MCF 10A (cell line): ENCODE measurements at regions of chr6 and their contacts with region 1.

Region 1: DNA sequence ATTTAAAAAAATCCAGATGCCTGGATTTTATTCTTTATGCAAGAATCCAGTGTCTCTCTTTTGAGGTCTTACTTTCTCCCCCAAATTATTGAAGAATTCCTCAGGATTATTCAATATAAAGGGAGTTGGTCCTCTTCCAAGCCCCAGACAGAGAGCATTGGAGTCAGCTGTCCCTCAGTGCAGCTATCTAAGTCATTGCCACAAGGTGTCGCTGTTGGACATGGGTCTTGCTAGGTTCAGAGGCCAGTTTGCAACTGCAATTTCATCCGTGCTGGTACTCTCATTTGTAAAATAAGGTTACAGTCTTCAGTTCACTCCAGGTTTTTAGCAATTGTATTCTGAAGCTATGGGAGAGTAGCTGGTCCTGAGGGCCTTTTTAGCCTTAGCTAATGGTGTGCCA is 27.8 kb downstream of the CCN2 start:
- DNase-seq: peak; percentile 83
- H3K4me3 Mint-ChIP-seq: no peak overlapping the region
- H3K27ac Mint-ChIP-seq: no peak overlapping the region
- H3K4me1 Mint-ChIP-seq: peaks cover 6% of the 10 kb centered on the region
- H3K27me3 Mint-ChIP-seq: no peaks in the 10 kb centered on the region
- CTCF ChIP-seq: peak; percentile 54

Region 2: DNA sequence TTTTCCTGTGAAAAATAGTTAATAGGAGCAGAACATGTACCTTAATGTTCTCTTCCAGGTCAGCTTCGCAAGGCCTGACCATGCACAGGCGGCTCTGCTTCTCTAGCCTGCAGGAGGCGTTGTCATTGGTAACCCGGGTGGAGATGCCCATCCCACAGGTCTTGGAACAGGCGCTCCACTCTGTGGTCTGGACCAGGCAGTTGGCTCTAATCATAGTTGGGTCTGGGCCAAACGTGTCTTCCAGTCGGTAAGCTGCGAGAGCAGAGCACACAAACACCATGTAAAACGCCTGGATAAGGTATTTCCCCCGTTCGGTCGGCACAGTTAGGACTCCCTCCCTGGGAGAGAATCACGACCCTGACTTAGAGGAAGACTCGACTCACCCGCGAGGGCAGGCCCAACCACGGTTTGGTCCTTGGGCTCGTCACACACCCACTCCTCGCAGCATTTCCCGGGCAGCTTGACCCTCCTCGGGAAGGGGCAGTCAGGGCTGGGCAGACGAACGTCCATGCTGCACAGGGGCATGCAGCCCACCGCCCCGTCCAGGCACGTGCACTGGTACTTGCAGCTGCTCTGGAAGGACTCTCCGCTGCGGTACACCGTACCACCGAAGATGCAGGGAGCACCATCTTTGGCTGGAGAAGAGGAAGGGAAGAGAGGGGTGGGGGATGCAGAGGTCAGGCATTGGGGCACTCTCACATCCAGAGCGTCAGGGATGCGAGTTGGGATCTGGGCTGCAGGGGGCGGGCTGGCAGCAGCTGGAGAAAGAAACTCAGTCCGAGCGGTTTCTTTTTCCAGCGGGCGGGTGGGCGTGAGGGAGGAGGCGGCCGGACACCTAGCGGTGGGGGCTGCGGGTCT is 26.8 kb after region 1 on chr6:
- CTCF ChIA-PET with region 1: interaction called, 19 read pairs
- POLR2A ChIA-PET with region 1: interaction called, 4 read pairs
- intact Hi-C with region 1: no loop called
- DNase-seq: peak; percentile 90
- H3K4me3 Mint-ChIP-seq: peak overlapping the region; percentile 88
- H3K27ac Mint-ChIP-seq: peak overlapping the region; percentile 76
- H3K4me1 Mint-ChIP-seq: peaks cover 44% of the 10 kb centered on the region
- H3K27me3 Mint-ChIP-seq: no peaks in the 10 kb centered on the region
- CTCF ChIP-seq: peak; percentile 45

Region 3: GRCh38 chr6:132179955-132180354 is 256.6 kb after region 1 on chr6:
- CTCF ChIA-PET with region 1: interaction called, 10 read pairs
- POLR2A ChIA-PET with region 1: no interaction called
- intact Hi-C with region 1: no loop called
- DNase-seq: no peak
- H3K4me3 Mint-ChIP-seq: no peak overlapping the region
- H3K27ac Mint-ChIP-seq: no peak overlapping the region
- H3K4me1 Mint-ChIP-seq: no peaks in the 10 kb centered on the region
- H3K27me3 Mint-ChIP-seq: no peaks in the 10 kb centered on the region
- CTCF ChIP-seq: no peak

Region 4: GRCh38 chr6:132210886-132211563 is 287.7 kb after region 1 on chr6:
- CTCF ChIA-PET with region 1: interaction called, 59 read pairs
- POLR2A ChIA-PET with region 1: no interaction called
- intact Hi-C with region 1: no loop called
- DNase-seq: no peak
- H3K4me3 Mint-ChIP-seq: no peak overlapping the region
- H3K27ac Mint-ChIP-seq: no peak overlapping the region
- H3K4me1 Mint-ChIP-seq: peaks cover 6% of the 10 kb centered on the region
- H3K27me3 Mint-ChIP-seq: no peaks in the 10 kb centered on the region
- CTCF ChIP-seq: no peak

Region 5: GRCh38 chr6:132252113-132252512 is 328.8 kb after region 1 on chr6:
- CTCF ChIA-PET with region 1: interaction called, 76 read pairs
- POLR2A ChIA-PET with region 1: no interaction called
- intact Hi-C with region 1: no loop called
- DNase-seq: peak; percentile 60
- H3K4me3 Mint-ChIP-seq: no peak overlapping the region
- H3K27ac Mint-ChIP-seq: peak overlapping the region; percentile 57
- H3K4me1 Mint-ChIP-seq: peaks cover 11% of the 10 kb centered on the region
- H3K27me3 Mint-ChIP-seq: no peaks in the 10 kb centered on the region
- CTCF ChIP-seq: no peak

Region 6: DNA sequence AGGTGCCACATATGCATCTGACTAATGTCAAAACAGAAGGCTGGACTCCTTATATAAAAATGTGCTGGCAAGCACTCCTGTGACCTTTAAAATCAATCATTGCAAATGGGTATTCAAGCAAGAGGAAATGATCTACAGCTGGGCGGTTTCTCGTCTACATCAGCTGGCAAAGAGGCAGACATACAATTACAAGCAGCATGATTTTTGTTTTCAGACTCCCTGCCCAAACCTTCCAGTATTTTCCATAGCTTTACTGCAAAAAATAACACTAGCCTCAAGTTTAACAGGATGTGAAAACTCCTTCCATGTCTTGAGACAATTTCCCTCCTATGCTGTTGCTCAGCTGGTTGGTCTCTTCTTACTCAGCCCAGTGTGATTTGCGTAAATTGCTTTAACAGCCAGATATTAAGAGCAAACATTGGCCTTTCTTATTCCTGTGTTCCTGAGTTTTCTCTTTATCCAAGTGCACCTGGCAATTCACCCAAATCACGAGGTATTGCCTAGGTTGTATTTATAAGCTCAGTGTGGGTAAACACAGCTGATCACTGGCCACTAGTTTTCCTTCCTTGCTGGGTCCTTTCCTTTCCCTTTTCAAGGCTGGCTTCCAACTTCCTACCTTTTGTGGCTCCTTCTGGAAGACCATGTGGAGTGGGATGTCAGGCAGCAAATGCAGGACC is 347.5 kb after region 1 on chr6:
- CTCF ChIA-PET with region 1: interaction called, 25 read pairs
- POLR2A ChIA-PET with region 1: no interaction called
- intact Hi-C with region 1: no loop called
- DNase-seq: no peak
- H3K4me3 Mint-ChIP-seq: no peak overlapping the region
- H3K27ac Mint-ChIP-seq: no peak overlapping the region
- H3K4me1 Mint-ChIP-seq: no peaks in the 10 kb centered on the region
- H3K27me3 Mint-ChIP-seq: no peaks in the 10 kb centered on the region
- CTCF ChIP-seq: no peak

Region 7: GRCh38 chr6:132344811-132345210 is 421.5 kb after region 1 on chr6:
- CTCF ChIA-PET with region 1: no interaction called
- POLR2A ChIA-PET with region 1: no interaction called
- intact Hi-C with region 1: no loop called
- DNase-seq: no peak
- H3K4me3 Mint-ChIP-seq: no peak overlapping the region
- H3K27ac Mint-ChIP-seq: no peak overlapping the region
- H3K4me1 Mint-ChIP-seq: no peaks in the 10 kb centered on the region
- H3K27me3 Mint-ChIP-seq: no peaks in the 10 kb centered on the region
- CTCF ChIP-seq: no peak

Region 8: DNA sequence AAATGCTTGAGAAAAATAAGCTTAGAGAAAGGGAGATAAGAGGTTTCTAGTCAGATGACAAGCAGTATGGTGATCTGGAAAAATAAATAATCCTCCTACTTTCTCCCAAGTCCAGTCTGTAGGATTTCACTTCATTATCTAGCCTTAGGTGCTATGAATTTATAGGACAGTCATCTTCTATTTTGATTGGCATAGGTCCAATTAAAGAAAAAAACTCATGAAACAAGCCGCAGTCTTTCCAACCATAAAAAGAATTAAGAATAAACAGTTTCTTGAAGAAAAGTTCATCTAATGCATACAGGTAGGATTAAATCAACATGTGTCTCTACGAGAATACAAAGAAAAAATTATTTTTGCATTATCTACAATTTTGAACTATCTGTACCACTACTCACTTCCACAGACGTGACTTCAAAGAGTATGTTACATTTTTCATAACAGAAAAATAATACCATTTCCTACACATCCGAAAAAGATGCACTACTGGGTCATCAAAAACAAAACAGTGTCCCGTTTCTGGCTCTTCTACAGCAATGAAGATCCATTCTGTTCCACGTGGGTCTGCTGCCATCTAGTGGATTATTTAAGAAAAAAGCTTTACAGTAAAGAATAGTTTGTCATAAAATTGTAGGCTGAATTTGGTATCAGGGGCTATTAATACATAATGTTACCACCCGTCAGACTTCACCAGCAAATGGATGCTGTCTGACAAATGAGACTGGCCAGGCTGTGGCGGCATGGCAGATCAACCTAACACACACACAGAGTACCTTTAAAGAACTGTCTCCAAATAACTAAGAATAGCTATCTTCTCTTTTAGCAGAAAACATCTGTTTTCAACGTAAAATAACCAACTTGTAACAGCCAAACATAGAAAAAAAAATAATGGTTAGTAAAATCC is 560.7 kb after region 1 on chr6:
- CTCF ChIA-PET with region 1: interaction called, 4 read pairs
- POLR2A ChIA-PET with region 1: no interaction called
- intact Hi-C with region 1: loop called (anchors 2 kb)
- DNase-seq: peak; percentile 80
- H3K4me3 Mint-ChIP-seq: no peak overlapping the region
- H3K27ac Mint-ChIP-seq: no peak overlapping the region
- H3K4me1 Mint-ChIP-seq: peaks cover 8% of the 10 kb centered on the region
- H3K27me3 Mint-ChIP-seq: no peaks in the 10 kb centered on the region
- CTCF ChIP-seq: peak; percentile 67